Vagina (tissue), 2 donors: ENCODE measurements at regions of chr11 and their contacts with region 1.

Region 1: DNA sequence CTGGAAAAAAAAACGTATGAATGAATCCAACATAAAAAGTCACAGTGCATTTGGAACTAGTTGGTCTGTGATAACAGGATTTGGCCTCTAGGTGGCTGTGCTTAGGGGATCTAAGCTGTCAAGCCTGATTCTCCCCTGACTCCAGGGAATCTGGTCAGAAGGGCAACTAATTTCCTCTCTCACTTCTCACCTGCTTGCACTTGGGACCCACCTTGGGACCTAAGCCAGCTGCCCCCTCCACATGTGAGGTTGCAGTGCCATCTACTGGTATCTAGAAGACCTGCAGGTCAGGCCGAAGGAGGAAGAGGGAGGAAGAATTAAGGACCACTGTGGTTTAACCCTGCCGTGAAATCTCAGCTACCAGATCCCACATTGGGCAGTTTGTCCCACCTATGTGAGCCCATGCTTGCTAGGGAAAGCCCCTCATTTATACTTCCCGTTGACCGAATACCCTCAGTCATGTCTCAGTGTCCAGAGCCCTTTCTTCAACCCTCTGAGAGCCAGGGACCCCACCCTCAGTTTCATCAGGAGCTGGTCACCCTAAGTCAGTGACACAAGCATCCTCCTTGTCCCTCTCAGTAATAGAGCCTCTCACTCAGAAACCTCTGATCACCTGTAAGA is 33.2 kb upstream of the CAVIN3 start:
- DNase-seq: no peak
- H3K4me3 ChIP-seq: no peak overlapping the region
- H3K27ac ChIP-seq: no peak overlapping the region
- H3K4me1 ChIP-seq: peaks cover 20% of the 10 kb centered on the region
- H3K27me3 ChIP-seq: no peaks in the 10 kb centered on the region
- CTCF ChIP-seq: peak; percentile 82 to 95 (median 89)
- POLR2A ChIP-seq: no peak

Region 2: DNA sequence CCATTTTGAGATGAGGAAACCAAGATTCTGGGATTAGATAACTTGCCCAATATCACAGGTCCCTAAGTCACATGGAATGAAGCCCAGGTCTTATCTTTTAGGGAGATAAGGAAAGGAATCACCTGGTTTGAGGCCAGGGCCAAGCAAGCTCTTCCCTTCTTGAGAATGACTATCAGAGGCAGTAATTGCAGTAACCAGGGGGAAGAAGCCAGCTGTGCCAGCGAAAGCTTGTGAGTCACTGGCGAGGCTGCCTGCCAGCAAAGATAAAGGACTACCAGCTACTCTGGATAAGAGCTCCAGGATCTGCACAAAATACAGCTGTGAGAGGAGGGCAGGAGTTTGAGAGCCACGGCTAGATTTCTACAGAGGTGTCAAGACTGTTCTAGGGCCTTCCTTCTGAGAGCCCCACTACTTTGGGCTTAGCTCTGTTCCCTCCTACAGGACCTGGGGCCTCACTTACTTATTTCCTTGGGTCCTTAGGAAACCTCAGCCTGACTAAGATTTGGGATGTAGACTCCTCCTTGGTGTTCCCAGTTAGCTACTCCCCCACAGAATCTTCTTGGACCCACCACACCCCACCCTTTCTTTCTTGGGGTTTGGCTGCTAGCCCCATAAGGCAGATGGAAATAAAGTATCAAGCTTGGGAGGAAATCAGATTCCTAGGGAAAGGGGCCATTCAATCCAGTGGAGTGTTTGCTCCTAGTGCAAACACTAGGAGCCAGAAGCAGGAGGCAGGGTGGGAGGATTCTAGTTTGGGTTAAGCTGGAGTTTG is 103.5 kb before region 1 on chr11:
- intact Hi-C with region 1: loop called (anchors 10 kb)
- DNase-seq: no peak
- H3K4me3 ChIP-seq: no peak overlapping the region
- H3K27ac ChIP-seq: peak overlapping the region; percentile 30
- H3K4me1 ChIP-seq: no peaks in the 10 kb centered on the region
- H3K27me3 ChIP-seq: no peaks in the 10 kb centered on the region
- CTCF ChIP-seq: no peak
- POLR2A ChIP-seq: no peak

Region 3: DNA sequence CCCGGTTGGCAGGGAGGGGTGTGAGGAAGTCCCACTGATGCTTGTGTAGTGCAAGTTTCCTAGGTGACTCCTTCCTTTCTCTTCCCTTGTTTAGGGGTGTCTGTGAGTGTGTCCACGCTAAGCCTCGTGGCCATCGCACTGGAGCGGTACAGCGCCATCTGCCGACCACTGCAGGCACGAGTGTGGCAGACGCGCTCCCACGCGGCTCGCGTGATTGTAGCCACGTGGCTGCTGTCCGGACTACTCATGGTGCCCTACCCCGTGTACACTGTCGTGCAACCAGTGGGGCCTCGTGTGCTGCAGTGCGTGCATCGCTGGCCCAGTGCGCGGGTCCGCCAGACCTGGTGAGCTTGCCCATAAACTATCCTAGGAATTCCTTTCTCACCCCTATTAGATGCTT is 83.5 kb before region 1 on chr11:
- intact Hi-C with region 1: no loop called
- DNase-seq: no peak
- H3K4me3 ChIP-seq: no peak overlapping the region
- H3K27ac ChIP-seq: no peak overlapping the region
- H3K4me1 ChIP-seq: no peaks in the 10 kb centered on the region
- H3K27me3 ChIP-seq: no peaks in the 10 kb centered on the region
- CTCF ChIP-seq: no peak
- POLR2A ChIP-seq: no peak

Region 4: GRCh38 chr11:6320411-6321155 is 32.9 kb before region 1 on chr11 and contains the start of gene CAVIN3:
- intact Hi-C with region 1: loop called (anchors 5 kb)
- DNase-seq: peak in 1 of 2 donors; percentile 91
- H3K4me3 ChIP-seq: peak within 1 kb of the TSS; percentile 69 to 82
- H3K27ac ChIP-seq: peak within 1 kb of the TSS; percentile 100
- H3K4me1 ChIP-seq: peaks cover 58% of the 10 kb centered on the region
- H3K27me3 ChIP-seq: no peaks in the 10 kb centered on the region
- CTCF ChIP-seq: no peak
- POLR2A ChIP-seq: no peak
- total RNA-seq, gene CAVIN3: 156 TPM

Region 5: DNA sequence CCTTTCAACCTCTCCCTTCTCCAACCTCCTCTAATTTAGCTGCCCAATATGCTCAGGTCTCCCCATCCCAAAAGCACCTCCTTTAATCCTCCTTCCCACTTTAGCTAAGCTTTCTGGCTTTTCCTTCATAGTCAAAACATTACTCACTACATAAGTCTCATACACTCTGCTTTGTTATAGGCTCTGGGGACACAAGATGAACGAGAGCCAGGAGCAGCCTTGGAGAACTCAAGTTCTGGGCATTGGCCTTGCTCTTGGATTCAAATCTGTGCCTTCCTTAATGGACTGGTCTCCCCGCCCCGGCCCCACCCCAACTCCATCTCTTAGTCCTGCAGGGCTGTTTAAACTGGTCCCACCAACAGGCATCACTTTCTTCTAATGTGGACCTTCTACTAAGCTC is 98.7 kb after region 1 on chr11:
- intact Hi-C with region 1: no loop called
- DNase-seq: no peak
- H3K4me3 ChIP-seq: no peak overlapping the region
- H3K27ac ChIP-seq: no peak overlapping the region
- H3K4me1 ChIP-seq: no peaks in the 10 kb centered on the region
- H3K27me3 ChIP-seq: no peaks in the 10 kb centered on the region
- CTCF ChIP-seq: no peak
- POLR2A ChIP-seq: no peak

Region 6: DNA sequence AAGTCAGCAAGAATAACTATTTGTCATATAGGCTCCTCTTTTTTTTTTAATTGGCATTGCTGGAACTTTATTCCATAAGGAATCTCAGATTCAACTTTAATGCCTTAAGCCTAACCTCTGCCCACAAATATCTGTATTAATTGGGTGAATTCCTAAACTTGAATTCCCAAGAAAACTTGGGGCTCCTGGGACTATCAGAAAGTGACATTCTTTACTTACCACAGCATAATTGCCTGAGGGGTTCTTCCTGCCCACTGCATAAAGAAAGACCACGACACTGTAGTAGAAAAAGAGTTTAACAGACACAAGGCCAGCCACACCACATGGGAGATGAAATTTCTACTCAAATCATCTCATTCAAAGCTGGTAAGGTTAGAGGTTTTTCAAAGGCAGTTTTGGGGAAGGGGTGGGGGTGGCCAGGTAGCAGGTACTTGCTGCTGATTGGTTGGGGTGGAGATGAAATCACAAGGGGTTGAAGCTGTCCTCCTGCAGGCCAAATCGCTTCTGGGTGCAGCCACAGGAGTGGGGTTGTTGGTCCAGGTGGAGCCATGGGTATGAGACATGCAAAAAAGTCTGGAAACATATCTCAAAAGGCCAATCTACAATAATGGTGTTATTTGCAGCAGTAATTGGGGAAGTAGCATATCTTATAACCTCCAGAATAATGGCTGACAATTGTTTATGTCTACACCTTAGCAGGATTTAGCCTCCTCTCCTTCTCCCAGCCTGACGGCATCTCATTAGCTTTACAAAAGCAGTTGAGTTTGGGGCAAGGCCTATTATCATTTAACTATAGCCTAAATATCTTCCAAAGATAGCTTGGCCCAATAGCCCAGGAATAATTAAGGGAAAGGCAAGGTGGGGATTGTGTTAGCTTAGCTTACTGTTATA is 1616.5 kb after region 1 on chr11:
- intact Hi-C with region 1: no loop called
- DNase-seq: no peak
- H3K4me3 ChIP-seq: no peak overlapping the region
- H3K27ac ChIP-seq: no peak overlapping the region
- H3K4me1 ChIP-seq: no peaks in the 10 kb centered on the region
- H3K27me3 ChIP-seq: no peaks in the 10 kb centered on the region
- CTCF ChIP-seq: no peak
- POLR2A ChIP-seq: no peak